ENCODE measurements at regions of chr20 and their contacts with region 1.

Region 1: GRCh38 chr20:13953227-13953626 is 37.2 kb downstream of the SEL1L2 start:
- DNase-seq: no peak
- ATAC-seq: no peak
- H3K4me3 ChIP-seq: no peak overlapping the region
- H3K27ac ChIP-seq: no peak overlapping the region
- H3K4me1 ChIP-seq: no peaks in the 10 kb centered on the region
- H3K27me3 ChIP-seq: no peaks in the 10 kb centered on the region
- CTCF ChIP-seq: peak; percentile 49

Region 2: DNA sequence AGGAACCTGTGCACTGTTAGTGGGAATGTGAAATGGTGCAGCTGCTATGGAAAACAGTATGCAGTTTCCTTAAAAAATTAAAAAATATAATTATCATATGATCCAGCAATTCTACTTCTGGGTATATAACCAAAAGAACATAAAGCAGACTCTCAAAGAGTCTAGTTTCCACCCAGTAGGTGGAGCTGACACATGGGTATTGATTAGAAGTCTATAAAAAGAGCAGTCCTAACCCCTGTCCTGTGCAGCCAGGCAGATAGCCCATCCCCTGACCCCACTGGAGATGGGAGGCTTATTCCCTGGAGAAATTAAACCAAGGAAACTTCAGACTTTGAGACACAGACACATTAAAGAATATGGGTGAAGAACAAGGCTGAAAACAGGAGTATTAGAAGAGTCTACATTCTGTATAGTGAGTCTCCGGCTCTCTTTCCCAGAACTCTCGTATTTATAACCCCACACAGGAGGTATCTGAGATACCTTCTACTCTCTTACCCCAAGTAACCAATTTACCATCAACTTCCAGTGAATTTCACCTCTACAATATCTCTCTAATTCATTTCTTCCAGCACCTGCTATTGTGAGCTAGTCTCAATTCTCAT is 55.1 kb before region 1 on chr20:
- CTCF ChIA-PET with region 1: no interaction called
- POLR2A ChIA-PET with region 1: no interaction called
- intact Hi-C with region 1: loop called (anchors 5 kb)
- DNase-seq: peak; percentile 58
- ATAC-seq: peak; percentile 88
- H3K4me3 ChIP-seq: no peak overlapping the region
- H3K27ac ChIP-seq: no peak overlapping the region
- H3K4me1 ChIP-seq: no peaks in the 10 kb centered on the region
- H3K27me3 ChIP-seq: no peaks in the 10 kb centered on the region
- CTCF ChIP-seq: peak; percentile 67